ENCODE measurements at regions of chr6 and their contacts with region 1.

Region 1: DNA sequence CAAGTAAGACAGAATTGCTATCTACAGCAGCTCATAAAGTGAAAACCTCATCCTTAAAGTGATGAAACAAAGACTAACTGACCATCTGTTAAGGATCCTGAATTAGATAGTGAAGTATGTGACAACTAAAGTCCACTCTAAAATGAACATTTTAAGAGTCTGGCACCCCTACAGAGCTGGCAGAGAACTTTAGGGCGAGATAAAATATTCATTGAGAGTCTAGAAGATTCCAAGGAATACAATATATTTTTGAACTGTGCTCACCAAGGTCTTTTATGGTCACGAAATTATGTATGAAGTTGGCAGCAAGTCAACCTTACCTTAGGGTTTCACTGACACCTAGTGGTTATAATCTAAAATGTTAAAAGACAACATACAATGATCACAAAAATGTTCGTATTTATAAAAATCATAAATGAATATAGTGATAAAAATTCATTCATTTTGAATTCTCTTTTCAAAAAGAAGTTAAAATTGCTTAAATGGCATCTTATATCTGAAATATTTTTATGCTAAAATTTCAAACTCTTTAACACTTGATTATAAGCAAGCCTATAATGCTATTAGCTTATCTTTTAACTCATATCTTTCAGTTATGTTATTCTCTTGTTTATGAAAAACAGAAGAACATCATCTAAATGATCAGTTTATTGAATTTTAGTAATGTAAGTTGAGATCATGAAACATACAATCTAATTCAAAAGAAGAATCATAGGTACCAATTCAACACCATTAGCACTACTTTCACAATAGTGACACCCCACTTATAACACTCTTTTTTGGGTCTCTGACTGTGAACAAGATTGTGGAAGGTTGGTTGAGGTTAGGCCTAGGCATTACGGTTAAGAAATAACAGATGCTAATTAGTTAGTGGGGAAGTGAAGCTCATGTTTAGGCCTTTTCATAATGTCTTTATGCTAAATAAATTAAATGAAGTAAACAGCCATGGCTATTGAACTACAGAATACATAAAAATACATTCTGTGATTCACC is 27.5 kb downstream of the RSPH3 start:
- DNase-seq: peak in 2 of 35 experiments; percentile 7 to 78
- ATAC-seq: peak; percentile 43 to 70 (median 63)
- H3K4me3 ChIP-seq: no peak overlapping the region
- H3K4me3 Mint-ChIP-seq: no peak overlapping the region
- H3K27ac ChIP-seq: no peak overlapping the region
- H3K27ac Mint-ChIP-seq: no peak overlapping the region
- H3K4me1 ChIP-seq: no peaks in the 10 kb centered on the region
- H3K4me1 Mint-ChIP-seq: peaks cover 0 to 2% (median 0%) of the 10 kb centered on the region in 3 donors
- H3K27me3 ChIP-seq: no peaks in the 10 kb centered on the region
- H3K27me3 Mint-ChIP-seq: no peaks in the 10 kb centered on the region

Region 2: DNA sequence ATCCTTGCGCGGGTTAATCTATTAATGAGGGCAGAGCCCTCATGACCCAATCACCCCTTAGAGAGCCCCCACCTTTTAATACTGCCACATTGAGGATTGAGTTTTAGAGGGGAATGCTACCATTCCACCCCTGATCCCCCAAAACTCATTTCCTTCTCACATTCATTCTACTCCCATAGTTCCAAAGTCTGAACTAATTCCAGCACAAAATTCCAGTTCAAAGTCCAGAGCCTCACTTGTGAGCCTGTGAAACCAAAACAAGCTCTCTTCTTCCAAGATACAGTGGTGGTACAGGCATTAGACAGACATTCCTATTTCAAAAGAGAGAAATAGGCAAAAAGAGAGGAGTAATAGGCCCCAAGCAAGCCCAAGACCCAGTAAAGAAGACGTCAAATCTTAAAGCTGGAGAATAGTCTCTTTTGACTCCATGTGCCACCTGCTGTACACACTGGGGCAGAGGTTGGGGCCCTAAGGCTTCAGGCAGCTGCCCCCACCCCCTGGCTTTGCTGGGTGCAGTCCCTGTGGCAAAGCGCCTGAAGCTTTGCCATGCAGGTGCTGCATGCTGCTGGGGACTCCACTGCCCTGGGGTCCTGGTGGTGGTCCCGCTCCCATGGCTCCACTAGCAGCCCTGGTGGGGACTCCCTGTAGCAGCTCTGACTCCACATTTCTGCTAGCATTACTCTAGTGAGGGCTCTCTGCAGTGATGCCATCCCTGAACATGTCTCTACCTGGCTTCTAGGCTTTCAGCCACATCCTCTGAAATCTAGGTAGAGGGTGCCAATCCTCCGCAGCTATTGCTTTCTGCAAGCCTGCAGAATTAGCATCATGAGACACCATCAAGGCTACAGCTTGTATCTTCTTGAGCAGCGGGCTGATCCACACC is 13.8 kb before region 1 on chr6:
- CTCF ChIA-PET with region 1: interaction called in 1 of 2 experiments, 3 read pairs
- POLR2A ChIA-PET with region 1: interaction called, 6 to 13 read pairs
- DNase-seq: peak in 17 of 35 experiments; percentile 5 to 42 (median 19)
- ATAC-seq: peak; percentile 50 to 70 (median 60)
- H3K4me3 ChIP-seq: no peak overlapping the region
- H3K4me3 Mint-ChIP-seq: no peak overlapping the region
- H3K27ac ChIP-seq: no peak overlapping the region
- H3K27ac Mint-ChIP-seq: peak overlapping the region in 1 of 2 donors; percentile 6
- H3K4me1 ChIP-seq: no peaks in the 10 kb centered on the region
- H3K4me1 Mint-ChIP-seq: peaks cover 0 to 19% (median 14%) of the 10 kb centered on the region in 3 donors
- H3K27me3 ChIP-seq: no peaks in the 10 kb centered on the region
- H3K27me3 Mint-ChIP-seq: no peaks in the 10 kb centered on the region